Heart right ventricle (tissue), 16 donors: ENCODE measurements at regions of chr4 and their contacts with region 1.

Region 1: GRCh38 chr4:143351774-143352451 is 15.2 kb downstream of the GAB1 start:
- DNase-seq: no peak
- ATAC-seq: peak in 4 of 8 donors; percentile 32 to 45 (median 35)
- H3K4me3 ChIP-seq: peak overlapping the region in 8 of 10 donors; percentile 23 to 48 (median 41)
- H3K27ac ChIP-seq: peak overlapping the region in 9 of 10 donors; percentile 41 to 79 (median 70)
- H3K4me1 ChIP-seq: peaks cover 10 to 67% (median 60%) of the 10 kb centered on the region in 9 donors
- H3K27me3 ChIP-seq: no peaks in the 10 kb centered on the region
- CTCF ChIP-seq: no peak

Region 2: GRCh38 chr4:143389579-143390195 is 37.8 kb after region 1 on chr4:
- intact Hi-C with region 1: loop called in 3 of 10 experiments (anchors 5 to 10 kb)
- DNase-seq: no peak
- ATAC-seq: peak in 4 of 8 donors; percentile 29 to 56 (median 40)
- H3K4me3 ChIP-seq: no peak overlapping the region
- H3K27ac ChIP-seq: peak overlapping the region in 7 of 10 donors; percentile 1 to 64 (median 22)
- H3K4me1 ChIP-seq: peaks cover 11 to 98% (median 71%) of the 10 kb centered on the region in 9 donors
- H3K27me3 ChIP-seq: no peaks in the 10 kb centered on the region
- CTCF ChIP-seq: no peak